ENCODE measurements at regions of chr4 and their contacts with region 1.

Region 1: DNA sequence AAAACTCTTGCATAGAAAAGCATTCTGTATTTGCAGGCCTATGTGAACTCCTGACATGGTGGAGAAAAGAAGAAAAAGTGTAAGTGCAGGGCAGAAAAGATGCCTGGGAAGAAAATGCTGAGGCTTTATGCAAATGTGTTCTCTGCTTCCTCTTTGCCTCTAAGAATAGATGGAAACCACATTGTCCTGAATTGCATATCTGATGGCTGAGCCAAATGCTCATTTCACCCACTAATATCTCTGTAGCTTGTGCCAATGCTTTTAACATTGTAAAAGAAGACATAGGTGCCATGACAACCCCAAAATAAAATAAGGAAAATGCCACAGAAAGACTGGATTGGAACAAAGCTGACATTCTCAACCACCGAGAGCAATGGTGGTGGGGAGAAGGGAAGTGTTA is 307.4 kb downstream of the GRIA2 start:
- DNase-seq: no peak

Region 2: GRCh38 chr4:156146571-156146970 is 1381.4 kb before region 1 on chr4:
- intact Hi-C with region 1: loop called in 1 of 2 experiments (anchors 5 kb)
- DNase-seq: no peak